Ascending aorta (tissue), 2 donors: ENCODE measurements at regions of chr3 and their contacts with region 1.

Region 1: DNA sequence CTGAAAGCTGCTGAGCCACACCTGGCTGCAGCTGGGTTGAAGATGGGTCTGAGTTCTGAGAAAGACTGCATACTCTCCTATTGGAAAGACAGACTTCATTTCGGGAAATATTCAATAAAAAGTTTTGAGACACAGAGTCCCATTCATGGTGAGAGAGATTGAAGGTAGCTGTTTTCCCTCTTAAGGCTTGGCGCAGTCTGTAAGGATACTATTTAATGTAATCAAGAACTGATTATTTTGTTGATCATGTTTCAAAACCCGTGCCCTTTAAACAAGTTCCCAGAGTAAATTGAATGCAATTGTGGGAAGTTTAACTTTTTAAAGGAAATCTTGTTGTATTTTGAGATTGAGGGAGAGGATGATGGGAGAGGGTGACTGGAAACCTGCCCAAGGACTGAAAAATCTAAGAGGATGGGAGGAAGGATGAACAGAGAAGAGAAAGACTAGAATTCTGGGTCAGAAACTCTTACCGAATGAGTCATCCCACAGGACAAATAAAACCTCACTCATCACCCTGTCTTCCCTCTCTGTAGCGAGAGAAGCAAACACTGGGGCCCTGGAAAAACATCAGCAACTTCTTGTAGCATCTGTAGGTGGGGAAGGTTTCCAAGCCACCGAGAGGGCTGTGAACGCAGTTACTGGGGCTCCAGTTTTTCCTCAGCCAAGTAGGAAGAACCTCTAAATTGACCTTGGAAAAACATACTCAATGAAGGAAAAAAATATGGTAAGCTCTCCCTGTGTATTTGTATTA is 193.2 kb upstream of the TPRG1 start:
- DNase-seq: no peak
- H3K4me3 ChIP-seq: no peak overlapping the region
- H3K27ac ChIP-seq: no peak overlapping the region
- H3K4me1 ChIP-seq: peaks cover 0 to 9% of the 10 kb centered on the region in 2 donors
- H3K27me3 ChIP-seq: no peaks in the 10 kb centered on the region
- CTCF ChIP-seq: no peak

Region 2: GRCh38 chr3:189001559-189001958 is 23.0 kb after region 1 on chr3:
- intact Hi-C with region 1: no loop called
- DNase-seq: no peak
- H3K4me3 ChIP-seq: no peak overlapping the region
- H3K27ac ChIP-seq: no peak overlapping the region
- H3K4me1 ChIP-seq: no peaks in the 10 kb centered on the region
- H3K27me3 ChIP-seq: no peaks in the 10 kb centered on the region
- CTCF ChIP-seq: no peak

Region 3: GRCh38 chr3:189132231-189132707 is 153.7 kb after region 1 on chr3:
- intact Hi-C with region 1: loop called (anchors 5 kb)
- DNase-seq: peak in 1 of 2 donors; percentile 68
- H3K4me3 ChIP-seq: no peak overlapping the region
- H3K27ac ChIP-seq: no peak overlapping the region
- H3K4me1 ChIP-seq: no peaks in the 10 kb centered on the region
- H3K27me3 ChIP-seq: no peaks in the 10 kb centered on the region
- CTCF ChIP-seq: no peak